ENCODE measurements at regions of chr19 and their contacts with region 1.

Region 1: GRCh38 chr19:4139614-4140236 is 13.7 kb upstream of the CREB3L3 start:
- DNase-seq: peak; percentile 92
- ATAC-seq: peak; percentile 97
- H3K4me3 Mint-ChIP-seq: peak overlapping the region; percentile 33
- H3K27ac Mint-ChIP-seq: peak overlapping the region; percentile 45
- H3K4me1 Mint-ChIP-seq: peaks cover 10% of the 10 kb centered on the region
- H3K27me3 Mint-ChIP-seq: peaks cover 10% of the 10 kb centered on the region

Region 2: GRCh38 chr19:3995627-3996026 is 144.1 kb before region 1 on chr19:
- CTCF ChIA-PET with region 1: interaction called, 11 read pairs
- DNase-seq: no peak
- ATAC-seq: no peak
- H3K4me3 Mint-ChIP-seq: no peak overlapping the region
- H3K27ac Mint-ChIP-seq: no peak overlapping the region
- H3K4me1 Mint-ChIP-seq: peaks cover 5% of the 10 kb centered on the region
- H3K27me3 Mint-ChIP-seq: no peaks in the 10 kb centered on the region

Region 3: GRCh38 chr19:4035582-4035981 is 104.1 kb before region 1 on chr19:
- CTCF ChIA-PET with region 1: no interaction called
- DNase-seq: no peak
- ATAC-seq: peak; percentile 12
- H3K4me3 Mint-ChIP-seq: no peak overlapping the region
- H3K27ac Mint-ChIP-seq: no peak overlapping the region
- H3K4me1 Mint-ChIP-seq: no peaks in the 10 kb centered on the region
- H3K27me3 Mint-ChIP-seq: no peaks in the 10 kb centered on the region

Region 4: GRCh38 chr19:4075373-4075772 is 64.4 kb before region 1 on chr19:
- CTCF ChIA-PET with region 1: no interaction called
- DNase-seq: peak; percentile 75
- ATAC-seq: peak; percentile 45
- H3K4me3 Mint-ChIP-seq: peak overlapping the region; percentile 0
- H3K27ac Mint-ChIP-seq: peak overlapping the region; percentile 79
- H3K4me1 Mint-ChIP-seq: peaks cover 49% of the 10 kb centered on the region
- H3K27me3 Mint-ChIP-seq: no peaks in the 10 kb centered on the region

Region 5: DNA sequence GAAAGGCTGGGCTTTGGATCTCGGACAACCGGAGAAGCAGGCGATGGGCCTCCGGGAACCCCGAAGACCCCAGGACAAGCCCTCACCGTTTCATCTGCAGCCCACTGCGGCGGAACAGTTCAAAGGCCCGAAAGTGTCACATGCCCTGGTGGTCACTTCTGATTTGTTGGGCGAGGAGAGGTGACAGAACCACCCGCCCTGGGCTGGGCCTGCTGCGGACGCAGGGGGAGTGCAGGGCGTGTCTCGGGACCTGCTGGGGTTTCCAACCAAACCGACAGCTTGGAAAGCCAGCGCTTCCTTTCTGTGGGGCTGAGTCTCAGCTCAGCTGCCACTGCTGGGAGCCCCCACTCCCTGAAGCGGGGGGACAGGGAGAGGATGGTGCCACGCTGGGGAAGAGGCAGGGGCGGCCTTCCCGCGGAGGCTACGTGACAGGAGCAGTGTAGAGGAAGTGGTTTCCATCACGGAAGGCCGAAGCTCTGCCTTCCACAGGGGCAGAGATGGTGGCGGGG is 50.3 kb before region 1 on chr19:
- CTCF ChIA-PET with region 1: interaction called, 22 read pairs
- DNase-seq: peak; percentile 92
- ATAC-seq: peak; percentile 77
- H3K4me3 Mint-ChIP-seq: peak overlapping the region; percentile 62
- H3K27ac Mint-ChIP-seq: peak overlapping the region; percentile 92
- H3K4me1 Mint-ChIP-seq: peaks cover 58% of the 10 kb centered on the region
- H3K27me3 Mint-ChIP-seq: no peaks in the 10 kb centered on the region

Region 6: DNA sequence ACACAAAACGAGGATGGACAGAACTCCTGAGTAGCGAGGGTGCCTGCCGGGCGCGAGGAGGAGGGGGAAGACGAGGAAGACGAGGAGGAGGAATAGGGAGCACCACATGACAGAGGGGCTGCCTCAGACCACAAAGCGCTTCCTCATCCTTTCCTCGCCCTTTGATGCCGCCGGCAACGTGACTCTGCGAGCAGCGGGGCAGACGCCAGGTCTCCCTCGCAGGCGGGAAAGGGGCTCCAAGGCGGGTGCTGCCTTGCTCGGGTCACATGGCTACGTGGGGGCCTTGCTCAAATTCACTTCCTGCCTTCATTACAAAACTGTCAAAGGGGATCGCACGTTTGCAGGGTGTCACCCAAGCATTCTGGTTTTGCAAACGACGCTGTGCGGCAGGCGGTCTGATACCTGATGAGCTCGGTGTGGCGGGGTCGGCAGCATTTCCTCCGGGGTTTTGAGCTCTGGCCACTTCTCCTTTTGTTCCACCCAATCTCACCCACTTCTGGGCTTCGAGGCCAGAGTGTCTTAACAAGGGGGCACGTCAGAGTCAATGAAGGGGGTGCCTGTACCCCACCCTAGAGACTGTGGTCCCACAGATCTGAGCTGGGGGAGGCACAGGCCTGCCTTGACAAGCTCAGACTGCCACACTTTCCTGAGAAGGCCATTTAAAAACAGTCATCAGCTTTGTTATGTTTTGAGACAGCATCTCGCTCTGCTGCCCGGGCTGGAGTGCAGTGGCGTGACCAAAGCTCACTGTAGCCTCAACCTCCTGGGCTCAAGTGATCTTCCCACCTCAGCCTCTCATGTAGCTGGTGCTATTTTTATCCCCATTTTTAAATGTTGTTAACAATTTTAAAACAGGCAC is 30.7 kb before region 1 on chr19:
- CTCF ChIA-PET with region 1: interaction called, 26 read pairs
- DNase-seq: peak; percentile 94
- ATAC-seq: peak; percentile 68
- H3K4me3 Mint-ChIP-seq: peak overlapping the region; percentile 41
- H3K27ac Mint-ChIP-seq: peak overlapping the region; percentile 100
- H3K4me1 Mint-ChIP-seq: peaks cover 77% of the 10 kb centered on the region
- H3K27me3 Mint-ChIP-seq: no peaks in the 10 kb centered on the region

Region 7: DNA sequence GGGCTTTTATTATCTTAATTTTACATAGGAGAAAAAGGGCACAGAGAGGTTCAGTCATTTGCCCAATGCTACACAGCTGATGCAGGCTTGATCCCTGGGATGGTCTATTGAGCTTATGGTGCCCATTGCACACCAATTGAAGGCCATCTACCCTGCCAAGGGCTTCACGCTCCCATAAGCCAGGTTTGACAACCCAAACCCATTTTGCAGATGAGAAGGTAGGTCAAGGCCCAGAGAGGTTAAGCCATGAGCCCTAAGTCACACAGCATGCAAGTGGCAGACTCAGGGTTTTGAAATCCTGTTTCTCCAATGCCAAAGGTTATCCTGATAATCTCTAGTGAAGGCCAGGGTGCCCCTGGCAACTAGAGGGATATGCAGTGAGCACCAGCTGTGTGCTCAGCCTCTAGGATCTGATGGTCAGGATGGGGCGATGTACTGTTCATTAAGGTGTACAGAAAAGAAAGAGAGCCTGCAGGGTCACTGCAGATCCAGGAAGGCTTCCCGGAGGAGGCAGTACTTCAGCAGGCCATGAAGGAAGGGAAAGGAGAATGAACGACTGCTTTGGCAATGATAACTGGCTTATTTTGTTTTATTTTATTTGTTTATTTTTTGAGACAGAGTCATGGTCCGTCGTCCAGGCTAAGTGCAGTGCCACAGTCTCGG is 21.8 kb after region 1 on chr19:
- CTCF ChIA-PET with region 1: interaction called, 17 read pairs
- DNase-seq: no peak
- ATAC-seq: no peak
- H3K4me3 Mint-ChIP-seq: no peak overlapping the region
- H3K27ac Mint-ChIP-seq: no peak overlapping the region
- H3K4me1 Mint-ChIP-seq: no peaks in the 10 kb centered on the region
- H3K27me3 Mint-ChIP-seq: no peaks in the 10 kb centered on the region

Measured in activated CD8-positive, alpha-beta memory T cell treated with anti-CD3 and anti-CD28 coated beads, Interleukin-2, amount 10 ng/mL, durations not matched to agents 7 days and 5 days (primary cell).